H1 (cell line): ENCODE measurements at regions of chr13 and their contacts with region 1.

Region 1: DNA sequence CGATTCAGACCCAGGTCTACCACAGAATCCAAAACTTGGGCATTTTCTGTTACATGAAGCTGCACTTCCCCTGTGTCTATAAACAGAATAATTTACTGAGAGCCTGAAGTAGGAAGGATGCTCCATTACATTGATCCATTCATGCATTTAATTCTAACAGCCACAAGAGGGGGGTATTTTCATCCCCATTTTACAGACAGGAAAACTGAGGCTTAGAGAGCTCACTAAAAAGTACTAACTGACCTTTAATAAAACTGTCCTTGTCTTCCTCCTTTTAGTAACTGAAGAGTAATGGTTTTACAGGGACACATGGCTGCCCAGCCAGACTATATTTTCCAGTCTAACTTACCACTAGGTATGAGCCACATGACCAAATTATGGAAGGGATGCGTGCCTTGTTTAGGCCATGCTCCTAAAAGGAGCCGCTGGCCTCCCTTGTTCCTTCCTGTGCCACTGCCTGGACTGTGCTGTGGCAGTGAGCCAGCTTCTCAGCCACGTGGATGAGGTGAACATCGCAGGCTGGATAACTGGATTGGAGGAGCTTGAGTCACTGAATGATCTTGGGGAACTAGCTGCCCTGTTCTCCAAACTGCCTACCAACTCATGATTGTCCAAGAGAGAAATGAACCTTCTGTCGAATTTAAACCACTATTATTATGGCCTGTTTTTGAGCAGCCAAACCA is 108.3 kb downstream of the DOCK9 start:
- DNase-seq: no peak
- H3K4me3 ChIP-seq: no peak overlapping the region
- H3K27ac ChIP-seq: no peak overlapping the region
- H3K4me1 ChIP-seq: no peaks in the 10 kb centered on the region
- H3K27me3 ChIP-seq: no peaks in the 10 kb centered on the region
- CTCF ChIP-seq: peak in 1 of 3 experiments; percentile 45; a peak in 2 of 4 replicates
- EP300 ChIP-seq: no peak
- POLR2A ChIP-seq: no peak
- RAD21 ChIP-seq: peak; percentile 22 to 35; a peak in 3 of 4 replicates

Region 2: DNA sequence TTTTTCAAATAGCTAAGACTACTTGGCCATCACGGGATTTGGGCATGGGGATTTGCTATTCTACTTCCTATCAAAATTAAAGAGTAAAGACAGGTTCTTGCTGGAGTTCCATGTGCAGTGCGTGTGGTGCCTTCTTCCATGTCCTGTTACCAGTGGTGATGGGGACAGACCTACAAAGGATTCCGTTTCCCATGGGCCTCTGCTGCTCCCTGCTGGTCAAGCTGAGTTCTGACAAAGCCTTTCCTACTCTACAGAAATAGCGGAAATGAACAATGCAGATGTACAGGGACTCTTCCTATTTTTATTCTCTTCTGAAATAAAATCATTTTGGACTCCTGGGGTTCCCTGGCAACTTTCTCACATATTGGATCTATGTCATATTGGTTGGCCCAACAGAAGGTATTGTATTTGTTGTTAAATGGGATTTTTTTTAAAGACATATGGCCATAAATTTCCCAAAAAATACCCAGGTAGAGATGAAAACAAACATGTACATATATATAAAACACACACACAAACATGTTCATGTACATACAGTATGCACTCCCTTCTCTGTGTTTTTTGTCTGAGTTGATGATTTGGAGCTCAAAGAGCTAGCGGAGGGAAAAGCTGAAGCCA is 26.6 kb before region 1 on chr13:
- CTCF ChIA-PET with region 1: interaction called, 11 read pairs
- POLR2A ChIA-PET with region 1: no interaction called
- DNase-seq: peak in 1 of 2 experiments; percentile 87
- H3K4me3 ChIP-seq: no peak overlapping the region
- H3K27ac ChIP-seq: no peak overlapping the region
- H3K4me1 ChIP-seq: peaks cover 0 to 2% (median under 1%) of the 10 kb centered on the region in 4 experiments; a peak in 3 of 7 replicates
- H3K27me3 ChIP-seq: no peaks in the 10 kb centered on the region
- CTCF ChIP-seq: peak; percentile 73 to 89 (median 81)
- EP300 ChIP-seq: no peak
- POLR2A ChIP-seq: no peak
- RAD21 ChIP-seq: peak; percentile 91 to 93

Region 3: GRCh38 chr13:98853771-98854221 is 15.8 kb before region 1 on chr13:
- CTCF ChIA-PET with region 1: interaction called, 10 read pairs
- POLR2A ChIA-PET with region 1: no interaction called
- DNase-seq: no peak
- H3K4me3 ChIP-seq: no peak overlapping the region
- H3K27ac ChIP-seq: no peak overlapping the region
- H3K4me1 ChIP-seq: no peaks in the 10 kb centered on the region
- H3K27me3 ChIP-seq: no peaks in the 10 kb centered on the region
- CTCF ChIP-seq: no peak
- EP300 ChIP-seq: no peak
- POLR2A ChIP-seq: no peak
- RAD21 ChIP-seq: no peak

Region 4: GRCh38 chr13:98890186-98890585 is 20.6 kb after region 1 on chr13:
- CTCF ChIA-PET with region 1: interaction called, 13 read pairs
- POLR2A ChIA-PET with region 1: interaction called, 5 read pairs
- DNase-seq: no peak
- H3K4me3 ChIP-seq: no peak overlapping the region
- H3K27ac ChIP-seq: no peak overlapping the region
- H3K4me1 ChIP-seq: peaks cover 2 to 14% (median 9%) of the 10 kb centered on the region in 4 experiments; a peak in 6 of 7 replicates
- H3K27me3 ChIP-seq: no peaks in the 10 kb centered on the region
- CTCF ChIP-seq: no peak
- EP300 ChIP-seq: no peak
- POLR2A ChIP-seq: no peak
- RAD21 ChIP-seq: no peak

Region 5: DNA sequence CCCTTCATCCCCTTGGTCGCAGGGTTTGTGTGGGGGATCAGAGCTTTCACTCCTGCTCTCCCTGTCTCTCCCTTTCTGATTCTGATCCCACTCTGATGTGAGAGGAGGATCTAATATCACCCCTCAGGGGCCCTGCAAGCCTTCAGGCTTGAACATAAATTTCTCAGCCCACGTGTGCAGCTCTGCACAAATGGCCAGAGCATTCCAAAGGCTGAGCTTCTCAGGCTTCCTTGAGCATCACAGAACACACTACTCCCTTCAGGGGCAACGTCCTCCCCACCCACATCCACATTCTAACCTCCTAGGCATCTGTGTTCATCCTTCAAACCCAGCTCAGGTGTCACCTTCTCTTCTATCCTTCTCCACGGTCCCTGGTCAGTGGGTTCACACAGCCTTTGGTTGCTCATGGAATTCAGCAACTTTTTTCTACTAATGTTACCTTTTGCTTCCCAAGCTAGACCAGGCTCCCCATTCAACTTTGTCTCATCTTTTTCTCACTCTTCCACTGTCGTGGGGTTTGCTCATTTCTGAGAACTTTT is 132.7 kb after region 1 on chr13:
- CTCF ChIA-PET with region 1: interaction called, 12 read pairs
- POLR2A ChIA-PET with region 1: no interaction called
- DNase-seq: no peak
- H3K4me3 ChIP-seq: no peak overlapping the region
- H3K27ac ChIP-seq: no peak overlapping the region
- H3K4me1 ChIP-seq: peaks cover 0 to 12% (median 3%) of the 10 kb centered on the region in 4 experiments; a peak in 2 of 7 replicates
- H3K27me3 ChIP-seq: no peaks in the 10 kb centered on the region
- CTCF ChIP-seq: no peak
- EP300 ChIP-seq: no peak
- POLR2A ChIP-seq: no peak
- RAD21 ChIP-seq: no peak